ENCODE measurements at regions of chr3 and their contacts with region 1.

Region 1: GRCh38 chr3:65732051-65732935 is 306.4 kb downstream of the MAGI1 start:
- DNase-seq: peak; percentile 73
- H3K4me3 ChIP-seq: no peak overlapping the region
- H3K27ac ChIP-seq: no peak overlapping the region
- H3K4me1 ChIP-seq: no peaks in the 10 kb centered on the region
- H3K27me3 ChIP-seq: no peaks in the 10 kb centered on the region
- CTCF ChIP-seq: peak; percentile 71 to 74
- POLR2A ChIP-seq: no peak

Region 2: DNA sequence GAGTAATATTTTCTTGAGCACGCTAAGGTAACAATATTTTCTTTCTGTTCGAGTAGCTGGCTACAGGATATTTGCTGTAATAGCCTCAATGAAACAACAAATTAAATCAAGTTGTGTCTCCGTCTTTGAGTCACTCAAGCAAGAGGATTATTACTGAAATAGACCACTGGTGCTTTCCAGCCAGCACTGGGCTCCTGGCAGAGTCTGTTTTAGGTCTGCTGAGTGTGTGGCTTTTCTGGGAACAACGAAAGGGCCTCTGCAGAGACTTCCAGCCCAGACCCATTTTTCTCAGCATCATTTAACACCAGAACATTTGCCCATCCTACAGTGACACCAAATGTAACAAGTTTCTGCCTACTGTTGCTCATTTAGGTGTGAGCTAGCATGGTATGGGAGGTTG is 346.5 kb before region 1 on chr3:
- CTCF ChIA-PET with region 1: no interaction called
- POLR2A ChIA-PET with region 1: no interaction called
- dilution Hi-C with region 1: no loop called
- intact Hi-C with region 1: no loop called
- DNase-seq: no peak
- H3K4me3 ChIP-seq: no peak overlapping the region
- H3K27ac ChIP-seq: no peak overlapping the region
- H3K4me1 ChIP-seq: no peaks in the 10 kb centered on the region
- H3K27me3 ChIP-seq: no peaks in the 10 kb centered on the region
- CTCF ChIP-seq: no peak
- POLR2A ChIP-seq: no peak

Region 3: DNA sequence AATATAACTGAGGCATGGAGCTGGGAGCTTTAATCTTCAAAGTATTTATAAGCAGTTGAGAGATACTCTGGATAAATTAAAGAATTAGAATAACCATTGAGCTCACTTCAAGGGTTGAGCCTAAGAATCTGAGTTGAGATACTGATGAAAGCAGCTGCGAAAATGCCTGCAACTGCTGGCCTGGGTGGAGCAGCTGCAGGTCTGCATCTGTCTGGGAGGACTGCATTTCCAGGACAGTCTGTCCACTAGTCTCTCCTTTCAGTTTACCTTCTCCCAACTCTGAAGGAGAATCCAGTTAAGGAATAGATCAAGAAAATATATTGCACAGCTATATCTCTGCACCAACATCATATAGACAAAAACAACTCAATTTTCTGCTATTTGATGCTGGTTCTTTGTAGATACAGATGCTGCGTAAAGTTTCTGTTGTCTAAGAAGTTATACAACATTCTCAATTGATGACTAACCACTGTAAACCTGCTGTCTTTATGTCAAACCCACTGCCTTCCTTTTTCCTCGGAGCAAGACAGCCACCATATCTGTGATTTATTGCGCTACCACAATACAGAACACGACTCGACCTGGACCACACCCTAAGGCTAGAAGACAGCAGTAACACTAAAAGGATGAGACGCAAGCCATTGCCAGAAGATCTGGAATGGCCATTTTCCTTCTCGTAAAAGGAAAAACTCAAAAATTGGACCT is 61.4 kb after region 1 on chr3:
- CTCF ChIA-PET with region 1: no interaction called
- POLR2A ChIA-PET with region 1: no interaction called
- dilution Hi-C with region 1: no loop called
- intact Hi-C with region 1: no loop called
- DNase-seq: no peak
- H3K4me3 ChIP-seq: no peak overlapping the region
- H3K27ac ChIP-seq: no peak overlapping the region
- H3K4me1 ChIP-seq: no peaks in the 10 kb centered on the region
- H3K27me3 ChIP-seq: no peaks in the 10 kb centered on the region
- CTCF ChIP-seq: no peak
- POLR2A ChIP-seq: no peak

Region 4: DNA sequence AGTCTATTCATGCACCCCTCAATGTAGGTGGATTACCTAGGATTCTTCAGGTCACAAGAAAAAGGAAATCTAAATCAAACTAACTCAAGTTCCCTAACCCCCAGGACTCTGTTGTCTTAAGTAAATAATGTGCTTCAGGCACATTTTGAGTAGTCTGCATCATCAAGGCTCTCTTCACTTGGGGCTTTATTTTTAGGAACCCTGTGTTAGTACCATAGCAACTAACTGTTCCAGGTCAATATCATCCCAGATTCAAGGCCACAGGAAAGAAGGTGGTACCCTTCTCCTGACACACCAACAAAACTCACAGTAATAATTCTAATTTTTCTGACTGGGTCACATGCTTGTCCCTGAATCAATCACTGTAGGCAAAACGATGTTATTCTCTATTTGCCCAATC is 88.3 kb after region 1 on chr3:
- CTCF ChIA-PET with region 1: no interaction called
- POLR2A ChIA-PET with region 1: no interaction called
- dilution Hi-C with region 1: no loop called
- intact Hi-C with region 1: no loop called
- DNase-seq: no peak
- H3K4me3 ChIP-seq: no peak overlapping the region
- H3K27ac ChIP-seq: no peak overlapping the region
- H3K4me1 ChIP-seq: no peaks in the 10 kb centered on the region
- H3K27me3 ChIP-seq: no peaks in the 10 kb centered on the region
- CTCF ChIP-seq: no peak
- POLR2A ChIP-seq: no peak

Region 5: DNA sequence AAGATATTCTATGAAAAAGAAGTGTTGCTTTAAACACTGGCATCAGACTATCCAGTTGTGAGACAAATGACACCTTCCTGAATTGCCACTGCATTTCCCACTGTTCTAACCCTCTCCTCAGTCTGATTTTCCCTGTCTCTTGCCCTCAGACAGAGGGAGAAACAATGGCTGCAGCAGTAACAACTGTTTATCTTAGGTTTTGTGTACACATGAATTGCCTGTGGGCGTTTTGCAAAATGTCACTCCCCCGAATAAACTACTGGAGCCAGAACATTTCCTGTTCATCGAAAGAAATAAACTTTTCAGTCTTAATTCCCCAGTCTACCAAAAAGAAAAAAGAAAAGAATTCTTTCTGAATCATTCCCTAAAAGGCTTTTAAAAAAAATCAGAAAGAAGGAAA is 151.3 kb after region 1 on chr3:
- CTCF ChIA-PET with region 1: no interaction called
- POLR2A ChIA-PET with region 1: interaction called, 11 read pairs
- dilution Hi-C with region 1: no loop called
- intact Hi-C with region 1: no loop called
- DNase-seq: peak; percentile 68
- H3K4me3 ChIP-seq: no peak overlapping the region
- H3K27ac ChIP-seq: no peak overlapping the region
- H3K4me1 ChIP-seq: peaks cover 15% of the 10 kb centered on the region
- H3K27me3 ChIP-seq: no peaks in the 10 kb centered on the region
- CTCF ChIP-seq: no peak
- POLR2A ChIP-seq: no peak

Region 6: DNA sequence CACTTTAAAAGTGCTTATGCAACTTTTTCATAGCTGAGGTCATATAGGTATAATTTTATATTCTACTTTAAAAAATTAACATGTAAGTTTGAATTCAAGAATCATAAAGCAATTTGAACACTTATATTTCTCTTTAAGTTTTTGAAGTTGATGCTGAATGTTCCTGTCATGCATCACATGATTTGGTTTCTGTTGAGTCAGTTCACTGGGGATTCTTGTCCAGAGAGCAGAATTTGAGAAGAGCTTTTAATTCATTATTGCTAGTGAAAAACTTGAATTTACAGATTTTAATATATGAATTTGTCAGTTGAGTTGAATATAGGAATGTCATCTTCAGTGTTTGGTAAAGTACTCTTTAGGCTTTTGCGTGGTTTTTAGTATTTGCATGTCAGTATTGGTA is 496.4 kb after region 1 on chr3:
- CTCF ChIA-PET with region 1: no interaction called
- POLR2A ChIA-PET with region 1: no interaction called
- dilution Hi-C with region 1: no loop called
- intact Hi-C with region 1: no loop called
- DNase-seq: no peak
- H3K4me3 ChIP-seq: no peak overlapping the region
- H3K27ac ChIP-seq: no peak overlapping the region
- H3K4me1 ChIP-seq: no peaks in the 10 kb centered on the region
- H3K27me3 ChIP-seq: no peaks in the 10 kb centered on the region
- CTCF ChIP-seq: no peak
- POLR2A ChIP-seq: no peak

Measured in endothelial cell of umbilical vein (primary cell).